CD4-positive, alpha-beta memory T cell (primary cell): ENCODE measurements at regions of chr7 and their contacts with region 1.

Region 1: DNA sequence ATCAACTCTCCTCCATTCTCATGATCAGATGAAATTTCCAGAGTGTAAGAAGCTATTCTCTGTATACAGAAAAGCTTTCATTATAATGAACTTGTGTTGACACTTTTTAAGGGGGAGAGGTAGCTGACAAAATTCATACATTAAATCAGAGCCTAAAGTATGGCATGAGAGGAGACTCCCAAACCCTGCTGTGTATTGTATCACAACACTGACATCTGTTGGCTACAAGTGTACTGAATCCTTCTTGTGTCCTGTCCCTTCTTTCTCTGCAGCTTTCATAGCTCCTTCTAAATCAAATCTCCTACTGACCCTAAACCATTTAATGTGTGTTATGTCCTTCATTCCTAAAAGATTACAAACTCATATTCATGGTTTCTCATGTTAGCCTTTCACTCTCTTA is 70.9 kb downstream of the GCC1 start:
- DNase-seq: peak in 4 of 5 donors; percentile 22 to 44 (median 36)
- H3K4me3 ChIP-seq: no peak overlapping the region
- H3K4me3 Mint-ChIP-seq: no peak overlapping the region
- H3K27ac ChIP-seq: no peak overlapping the region
- H3K27ac Mint-ChIP-seq: no peak overlapping the region
- H3K4me1 ChIP-seq: no peaks in the 10 kb centered on the region
- H3K4me1 Mint-ChIP-seq: no peaks in the 10 kb centered on the region
- H3K27me3 ChIP-seq: no peaks in the 10 kb centered on the region
- H3K27me3 Mint-ChIP-seq: peaks cover 27 to 28% of the 10 kb centered on the region in 2 donors

Region 2: GRCh38 chr7:126803060-126803665 is 711.3 kb before region 1 on chr7:
- CTCF ChIA-PET with region 1: interaction called, 11 read pairs
- POLR2A ChIA-PET with region 1: no interaction called
- intact Hi-C with region 1: no loop called
- DNase-seq: peak in 4 of 5 donors; percentile 6 to 37 (median 20)
- H3K4me3 ChIP-seq: no peak overlapping the region
- H3K4me3 Mint-ChIP-seq: no peak overlapping the region
- H3K27ac ChIP-seq: no peak overlapping the region
- H3K27ac Mint-ChIP-seq: no peak overlapping the region
- H3K4me1 ChIP-seq: no peaks in the 10 kb centered on the region
- H3K4me1 Mint-ChIP-seq: no peaks in the 10 kb centered on the region
- H3K27me3 ChIP-seq: no peaks in the 10 kb centered on the region
- H3K27me3 Mint-ChIP-seq: no peaks in the 10 kb centered on the region

Region 3: DNA sequence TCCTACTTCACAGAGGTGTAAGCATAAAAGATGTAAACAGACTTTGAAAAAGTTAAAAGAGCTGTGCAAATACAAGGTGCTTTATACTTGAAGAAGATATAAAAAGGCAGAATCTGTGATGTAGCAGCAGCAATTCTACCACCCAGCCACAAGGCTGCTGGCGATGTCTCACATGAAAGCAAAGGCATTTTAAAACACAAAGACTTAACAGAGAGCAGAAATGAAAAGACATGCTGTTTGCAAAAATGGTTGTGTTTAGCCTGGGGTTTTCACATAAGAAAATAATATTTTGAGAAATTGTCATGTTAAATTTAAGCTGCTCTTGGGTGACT is 36.5 kb before region 1 on chr7:
- CTCF ChIA-PET with region 1: no interaction called
- POLR2A ChIA-PET with region 1: no interaction called
- intact Hi-C with region 1: no loop called
- DNase-seq: peak in 1 of 5 donors; percentile 2
- H3K4me3 ChIP-seq: no peak overlapping the region
- H3K4me3 Mint-ChIP-seq: no peak overlapping the region
- H3K27ac ChIP-seq: no peak overlapping the region
- H3K27ac Mint-ChIP-seq: no peak overlapping the region
- H3K4me1 ChIP-seq: no peaks in the 10 kb centered on the region
- H3K4me1 Mint-ChIP-seq: peaks cover 0 to 3% (median under 1%) of the 10 kb centered on the region in 4 donors
- H3K27me3 ChIP-seq: no peaks in the 10 kb centered on the region
- H3K27me3 Mint-ChIP-seq: peaks cover 22 to 27% of the 10 kb centered on the region in 2 donors